ENCODE measurements at regions of chr9 and their contacts with region 1.

Region 1: DNA sequence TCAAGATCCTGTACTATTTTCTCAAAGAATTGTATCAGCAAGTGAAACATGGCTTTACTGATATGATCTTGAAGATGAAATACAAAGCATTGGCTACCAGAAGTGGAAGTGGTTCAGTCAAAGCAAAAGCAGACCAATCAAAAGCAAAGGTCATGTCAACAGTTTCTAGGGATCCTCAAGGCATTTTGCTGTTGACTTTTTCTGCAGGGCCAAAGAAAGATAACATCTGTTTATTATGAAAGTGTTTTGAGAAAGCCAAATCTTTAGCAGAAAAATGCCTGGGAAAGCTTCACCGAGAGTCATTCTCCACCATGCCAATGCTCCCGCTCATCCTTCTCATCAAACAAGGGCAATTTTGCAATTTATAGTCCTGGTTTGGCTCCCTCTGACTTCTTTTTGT is 90.3 kb upstream of the ACO1 start:
- DNase-seq: no peak
- ATAC-seq: no peak
- H3K4me3 ChIP-seq: no peak overlapping the region
- H3K4me3 Mint-ChIP-seq: no peak overlapping the region
- H3K27ac ChIP-seq: no peak overlapping the region
- H3K27ac Mint-ChIP-seq: no peak overlapping the region
- H3K4me1 ChIP-seq: no peaks in the 10 kb centered on the region
- H3K4me1 Mint-ChIP-seq: no peaks in the 10 kb centered on the region
- H3K27me3 ChIP-seq: peaks cover 0 to 10% of the 10 kb centered on the region in 2 experiments
- H3K27me3 Mint-ChIP-seq: peaks cover 57% of the 10 kb centered on the region
- CTCF ChIP-seq: no peak

Region 2: GRCh38 chr9:32234451-32234850 is 59.7 kb before region 1 on chr9:
- CTCF ChIA-PET with region 1: no interaction called
- POLR2A ChIA-PET with region 1: no interaction called
- intact Hi-C with region 1: no loop called
- DNase-seq: no peak
- ATAC-seq: no peak
- H3K4me3 ChIP-seq: no peak overlapping the region
- H3K4me3 Mint-ChIP-seq: no peak overlapping the region
- H3K27ac ChIP-seq: no peak overlapping the region
- H3K27ac Mint-ChIP-seq: no peak overlapping the region
- H3K4me1 ChIP-seq: no peaks in the 10 kb centered on the region
- H3K4me1 Mint-ChIP-seq: no peaks in the 10 kb centered on the region
- H3K27me3 ChIP-seq: no peaks in the 10 kb centered on the region
- H3K27me3 Mint-ChIP-seq: no peaks in the 10 kb centered on the region
- CTCF ChIP-seq: no peak

Region 3: DNA sequence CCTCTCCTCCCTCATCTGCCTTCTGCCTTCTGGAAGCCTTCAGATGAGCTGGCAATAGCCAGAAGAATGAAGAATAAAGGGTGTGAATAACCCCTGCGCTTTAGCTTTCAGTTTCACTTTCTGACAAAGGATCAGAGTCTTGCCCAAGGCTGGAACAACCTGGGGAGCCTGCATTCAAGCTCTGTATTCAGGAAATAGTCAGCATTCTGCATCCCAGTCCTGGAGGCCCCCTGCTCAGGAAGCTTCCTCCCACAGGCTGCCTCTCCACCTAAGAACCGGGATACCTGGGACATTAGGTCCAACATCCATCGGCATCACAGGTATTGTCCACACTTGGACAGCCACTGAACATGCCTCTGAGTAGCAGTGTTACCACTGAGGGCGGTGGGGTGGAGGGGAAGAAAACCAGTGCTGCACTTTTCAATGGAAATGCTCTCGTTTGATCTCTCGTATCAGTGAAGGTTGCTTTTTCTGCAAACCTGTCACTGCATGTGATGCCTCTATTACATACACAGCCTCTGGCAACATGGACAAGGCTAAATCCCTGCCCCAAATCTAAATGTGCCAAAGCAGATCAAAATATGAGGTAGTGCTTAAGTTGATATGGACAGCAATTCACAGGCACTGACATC is 50.6 kb after region 1 on chr9:
- CTCF ChIA-PET with region 1: no interaction called
- POLR2A ChIA-PET with region 1: no interaction called
- intact Hi-C with region 1: loop called in 1 of 2 experiments (anchors 5 kb)
- DNase-seq: peak in 1 of 14 experiments; percentile 20
- ATAC-seq: no peak
- H3K4me3 ChIP-seq: no peak overlapping the region
- H3K4me3 Mint-ChIP-seq: no peak overlapping the region
- H3K27ac ChIP-seq: no peak overlapping the region
- H3K27ac Mint-ChIP-seq: no peak overlapping the region
- H3K4me1 ChIP-seq: peaks cover 6% of the 10 kb centered on the region
- H3K4me1 Mint-ChIP-seq: peaks cover 11% of the 10 kb centered on the region
- H3K27me3 ChIP-seq: no peaks in the 10 kb centered on the region
- H3K27me3 Mint-ChIP-seq: no peaks in the 10 kb centered on the region
- CTCF ChIP-seq: no peak

Measured in CD4-positive, alpha-beta T cell (primary cell).